Posterior cingulate gyrus (tissue), 11 donors: ENCODE measurements at regions of chr5 and their contacts with region 1.

Region 1: DNA sequence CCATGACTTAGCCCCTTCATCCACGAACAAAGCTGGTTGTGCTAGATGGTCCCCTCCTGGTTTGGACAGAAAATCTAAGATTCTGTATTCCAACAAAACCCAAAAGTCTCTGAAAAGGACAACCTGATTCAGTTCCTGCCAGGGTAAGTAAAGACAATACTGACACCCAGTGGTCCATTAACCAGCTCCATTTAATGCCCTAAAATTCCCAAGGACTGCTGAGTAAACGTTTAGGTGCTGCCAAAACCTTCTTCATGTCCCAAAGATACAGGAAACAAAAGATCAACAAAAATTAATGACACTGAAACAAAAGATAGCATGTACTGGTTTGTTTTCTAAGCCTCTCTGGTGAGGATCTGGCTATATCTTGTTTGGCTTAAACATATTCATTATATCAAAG is 25.3 kb upstream of the PPP1R2B start:
- DNase-seq: no peak

Region 2: GRCh38 chr5:154972476-154973080 is 1852.2 kb before region 1 on chr5:
- intact Hi-C with region 1: loop called (anchors 10 kb)
- DNase-seq: peak in 6 of 10 donors; percentile 26 to 77 (median 48)

Region 3: DNA sequence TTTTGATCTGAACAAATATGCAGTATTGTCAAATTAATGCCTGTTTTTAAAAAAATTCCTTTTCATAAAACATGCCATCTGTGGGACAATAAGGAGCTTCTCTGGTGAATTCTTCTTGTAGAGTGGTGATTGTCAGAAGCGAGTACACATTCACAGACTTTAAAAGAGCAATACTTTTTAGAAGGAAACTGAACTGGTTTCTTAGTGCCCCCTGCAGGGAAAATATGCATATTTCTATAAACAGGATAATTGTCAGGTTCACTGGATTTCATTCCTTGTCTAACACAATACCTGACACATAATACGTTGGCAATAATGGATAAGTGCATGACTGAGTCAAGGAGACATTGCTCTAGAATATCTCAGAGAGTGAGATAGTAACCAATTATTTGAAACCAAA is 1677.6 kb before region 1 on chr5:
- intact Hi-C with region 1: loop called (anchors 10 kb)
- DNase-seq: no peak

Region 4: DNA sequence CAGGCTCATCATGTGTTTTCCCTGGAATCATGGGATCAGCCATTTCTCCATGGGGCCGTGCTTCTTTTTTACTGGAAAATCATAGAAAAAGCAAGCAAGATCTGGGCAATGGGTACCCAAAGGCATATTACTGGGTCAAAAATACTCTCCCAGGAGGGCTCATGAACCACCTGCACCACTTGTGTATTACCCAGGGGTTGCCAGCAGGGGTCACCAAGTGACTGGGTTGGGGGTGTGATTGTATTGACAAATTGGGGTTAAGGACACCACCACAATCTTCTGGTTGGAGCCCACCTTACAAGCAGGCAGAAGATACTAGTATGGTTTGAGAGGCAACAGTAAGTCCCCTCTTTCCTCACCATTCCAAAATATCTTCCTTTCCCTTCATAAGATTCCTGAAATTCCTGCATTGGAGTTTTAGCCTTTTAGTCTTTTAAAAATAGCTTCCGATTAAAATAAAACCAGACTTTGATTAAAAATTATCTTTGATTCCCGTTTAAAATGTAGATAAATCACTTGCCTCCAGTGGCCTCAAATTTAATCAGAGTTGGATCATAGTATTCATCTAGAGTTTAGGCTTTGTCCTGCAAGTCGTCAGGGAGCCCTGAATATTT is 1207.9 kb before region 1 on chr5:
- intact Hi-C with region 1: loop called (anchors 1 kb)
- DNase-seq: peak in 8 of 10 donors; percentile 48 to 88 (median 60)

Region 5: GRCh38 chr5:155943516-155944407 is 881.0 kb before region 1 on chr5:
- intact Hi-C with region 1: loop called (anchors 2 kb)
- DNase-seq: peak in 9 of 10 donors; percentile 33 to 95 (median 63)

Region 6: DNA sequence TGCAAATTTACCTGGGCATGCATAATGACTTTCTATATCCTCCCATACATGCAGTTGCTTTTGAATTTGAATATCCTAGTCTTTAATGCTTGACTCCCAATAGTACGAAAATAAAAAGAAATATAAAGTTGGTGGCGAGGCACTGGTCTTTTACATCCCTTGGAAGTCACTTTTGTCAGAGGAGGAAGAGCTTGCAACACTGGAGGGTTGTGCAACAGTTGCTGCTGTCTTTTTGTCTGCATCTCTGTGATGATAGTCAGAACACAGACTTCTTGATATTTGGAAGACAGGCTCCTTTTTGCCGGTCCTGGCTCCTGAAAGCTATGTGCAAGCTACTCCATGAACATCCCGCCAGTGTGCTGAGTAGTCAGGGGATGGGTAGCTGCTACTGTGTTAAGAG is 514.7 kb before region 1 on chr5:
- intact Hi-C with region 1: no loop called
- DNase-seq: no peak